ENCODE measurements at regions of chr6 and their contacts with region 1.

Region 1: GRCh38 chr6:33235221-33235634 is 26.9 kb downstream of the RING1 start:
- DNase-seq: no peak
- H3K4me3 ChIP-seq: no peak overlapping the region
- H3K27ac ChIP-seq: no peak overlapping the region
- H3K4me1 ChIP-seq: peaks cover 0 to 3% of the 10 kb centered on the region in 2 donors
- H3K27me3 ChIP-seq: peaks cover 15% of the 10 kb centered on the region
- CTCF ChIP-seq: no peak
- POLR2A ChIP-seq: no peak

Region 2: DNA sequence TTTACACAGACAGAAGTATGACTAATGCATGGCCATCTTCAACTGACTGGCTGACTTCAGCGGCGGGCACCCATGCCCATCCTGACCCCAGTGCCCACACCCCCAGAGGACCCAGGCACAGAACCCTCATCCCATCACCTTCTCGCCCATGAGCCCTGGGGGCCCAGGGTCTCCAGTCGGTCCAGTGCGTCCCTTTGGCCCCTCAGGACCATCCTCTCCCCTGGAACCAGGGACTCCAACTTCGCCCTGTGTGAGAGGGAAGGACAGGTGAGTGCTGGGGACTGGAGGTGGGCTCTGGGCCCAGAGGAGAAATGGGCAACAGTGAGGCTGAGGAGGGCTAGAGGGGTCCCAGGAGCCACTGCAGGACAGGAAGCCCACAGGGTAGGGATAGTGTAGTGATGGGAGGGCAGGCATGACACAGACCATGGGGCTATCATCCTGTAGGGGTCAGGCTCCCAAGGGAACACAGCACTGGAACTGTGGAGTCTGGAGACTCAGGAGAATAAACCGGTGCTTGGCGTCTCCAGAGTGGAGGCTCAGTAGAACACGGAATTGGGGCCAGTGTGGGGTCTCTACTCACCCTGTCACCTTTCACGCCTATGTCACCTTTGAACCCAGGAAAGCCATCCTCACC is 59.7 kb before region 1 on chr6:
- intact Hi-C with region 1: loop called in 1 of 2 experiments (anchors 5 kb)
- DNase-seq: no peak
- H3K4me3 ChIP-seq: no peak overlapping the region
- H3K27ac ChIP-seq: no peak overlapping the region
- H3K4me1 ChIP-seq: no peaks in the 10 kb centered on the region
- H3K27me3 ChIP-seq: no peaks in the 10 kb centered on the region
- CTCF ChIP-seq: no peak
- POLR2A ChIP-seq: no peak